PC-3 (cell line): ENCODE measurements at regions of chr7 and their contacts with region 1.

Region 1: GRCh38 chr7:134954197-134955082 is 31.9 kb upstream of the AGBL3 start:
- DNase-seq: peak; percentile 50
- ATAC-seq: peak; percentile 59
- H3K4me3 ChIP-seq: no peak overlapping the region
- H3K27ac ChIP-seq: no peak overlapping the region
- H3K4me1 ChIP-seq: no peaks in the 10 kb centered on the region
- H3K27me3 ChIP-seq: no peaks in the 10 kb centered on the region
- CTCF ChIP-seq: peak; percentile 74

Region 2: GRCh38 chr7:134403677-134404076 is 550.8 kb before region 1 on chr7:
- CTCF ChIA-PET with region 1: no interaction called
- POLR2A ChIA-PET with region 1: no interaction called
- intact Hi-C with region 1: no loop called
- DNase-seq: no peak
- ATAC-seq: no peak
- H3K4me3 ChIP-seq: no peak overlapping the region
- H3K27ac ChIP-seq: no peak overlapping the region
- H3K4me1 ChIP-seq: no peaks in the 10 kb centered on the region
- H3K27me3 ChIP-seq: no peaks in the 10 kb centered on the region
- CTCF ChIP-seq: no peak

Region 3: DNA sequence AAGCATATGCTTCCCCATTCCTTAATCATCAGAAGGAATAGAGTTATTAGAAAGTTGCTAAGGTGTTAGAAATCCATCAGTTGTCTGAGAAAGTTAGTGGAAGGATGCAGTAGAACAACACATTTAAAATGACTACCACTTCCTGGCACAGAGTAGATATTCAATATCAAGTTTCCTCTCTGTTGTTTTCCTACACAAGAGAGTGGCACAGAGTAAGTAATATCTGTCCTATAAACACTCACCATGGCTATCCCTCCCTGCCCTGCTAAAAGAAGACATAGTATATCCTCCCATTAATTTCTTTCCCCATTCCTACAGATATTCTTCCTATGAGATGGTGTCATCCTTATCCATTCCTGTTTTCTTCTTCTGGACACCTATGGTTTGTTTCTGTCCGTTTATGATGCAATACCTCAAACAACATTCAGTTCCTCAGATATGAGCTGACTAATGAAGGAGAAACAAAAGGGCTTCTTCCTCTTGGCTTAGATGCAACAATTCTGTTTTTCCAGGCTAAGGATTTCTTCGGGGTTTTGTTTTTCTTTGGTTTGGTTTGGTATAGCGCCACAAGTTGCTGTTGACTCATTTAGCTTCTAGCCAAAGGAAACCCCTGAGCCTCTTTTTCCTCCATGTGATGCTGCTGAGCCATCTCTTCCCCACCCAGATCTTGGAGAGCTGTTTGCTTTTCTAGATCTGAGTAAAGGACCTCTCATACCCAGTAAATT is 340.7 kb before region 1 on chr7:
- CTCF ChIA-PET with region 1: no interaction called
- POLR2A ChIA-PET with region 1: no interaction called
- intact Hi-C with region 1: loop called (anchors 5 kb)
- DNase-seq: peak; percentile 95
- ATAC-seq: peak; percentile 88
- H3K4me3 ChIP-seq: no peak overlapping the region
- H3K27ac ChIP-seq: peak overlapping the region; percentile 94
- H3K4me1 ChIP-seq: peaks cover 35% of the 10 kb centered on the region
- H3K27me3 ChIP-seq: no peaks in the 10 kb centered on the region
- CTCF ChIP-seq: no peak

Region 4: DNA sequence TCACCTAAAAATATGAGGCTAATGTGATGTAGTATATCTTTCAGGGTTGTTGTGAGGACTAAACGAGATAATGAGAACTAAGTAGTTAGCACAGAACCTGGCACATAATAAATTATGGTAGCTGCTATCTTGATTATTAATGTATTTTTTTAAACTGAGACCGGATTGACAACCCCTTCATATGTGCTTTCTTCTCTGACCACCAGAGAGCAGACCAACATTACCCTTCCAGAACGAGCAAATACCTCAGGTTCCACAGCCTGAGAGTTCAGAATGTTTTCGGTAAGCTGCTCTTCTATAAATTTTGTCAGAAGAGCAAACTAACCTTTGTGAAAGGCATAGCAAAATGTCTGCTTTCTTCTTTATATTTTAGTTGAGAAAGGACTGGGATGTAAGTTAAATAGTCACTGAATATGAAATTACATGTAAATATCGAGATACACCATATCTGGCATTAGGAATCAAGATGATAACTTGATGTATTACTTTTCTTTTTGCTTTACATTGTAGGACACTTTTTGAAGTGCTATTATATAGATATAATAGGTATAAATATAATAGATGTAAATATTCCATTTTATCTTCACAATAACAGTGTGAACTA is 321.4 kb before region 1 on chr7:
- CTCF ChIA-PET with region 1: no interaction called
- POLR2A ChIA-PET with region 1: no interaction called
- intact Hi-C with region 1: loop called (anchors 1 kb)
- DNase-seq: peak; percentile 64
- ATAC-seq: peak; percentile 69
- H3K4me3 ChIP-seq: no peak overlapping the region
- H3K27ac ChIP-seq: no peak overlapping the region
- H3K4me1 ChIP-seq: no peaks in the 10 kb centered on the region
- H3K27me3 ChIP-seq: no peaks in the 10 kb centered on the region
- CTCF ChIP-seq: peak; percentile 84

Region 5: GRCh38 chr7:134690016-134690415 is 264.4 kb before region 1 on chr7:
- CTCF ChIA-PET with region 1: no interaction called
- POLR2A ChIA-PET with region 1: no interaction called
- intact Hi-C with region 1: loop called (anchors 1 kb)
- DNase-seq: peak; percentile 15
- ATAC-seq: peak; percentile 51; the same call in 1 of the 2 replicates
- H3K4me3 ChIP-seq: no peak overlapping the region
- H3K27ac ChIP-seq: no peak overlapping the region
- H3K4me1 ChIP-seq: 0 out of 2 replicates have a peak, but pooled peaks cover 11% of the 10 kb centered on the region
- H3K27me3 ChIP-seq: no peaks in the 10 kb centered on the region
- CTCF ChIP-seq: peak; percentile 42; the same call in 1 of the 2 replicates

Region 6: DNA sequence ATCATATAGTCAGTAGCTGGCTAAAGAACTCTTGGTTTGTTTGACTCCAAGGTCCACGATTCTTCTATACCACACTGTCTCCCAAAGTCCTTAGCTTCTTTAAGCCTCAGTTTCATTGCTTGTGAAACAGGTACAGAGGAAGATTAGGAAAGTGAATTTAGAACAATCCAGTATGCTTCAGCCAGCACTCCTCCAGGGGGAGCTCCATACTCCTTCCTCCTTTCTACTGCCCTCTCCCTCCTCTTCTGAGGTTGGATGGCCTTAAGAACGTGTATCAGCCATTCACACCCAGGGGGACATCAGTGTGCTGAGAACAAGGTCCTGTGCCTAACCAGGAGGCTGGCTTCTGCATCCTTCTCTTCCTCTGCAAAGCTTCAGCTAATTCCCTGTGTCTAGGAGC is 229.8 kb before region 1 on chr7:
- CTCF ChIA-PET with region 1: no interaction called
- POLR2A ChIA-PET with region 1: no interaction called
- intact Hi-C with region 1: loop called (anchors 1 kb)
- DNase-seq: peak; percentile 53
- ATAC-seq: peak; percentile 88
- H3K4me3 ChIP-seq: no peak overlapping the region
- H3K27ac ChIP-seq: no peak overlapping the region
- H3K4me1 ChIP-seq: no peaks in the 10 kb centered on the region
- H3K27me3 ChIP-seq: no peaks in the 10 kb centered on the region
- CTCF ChIP-seq: peak; percentile 75

Region 7: DNA sequence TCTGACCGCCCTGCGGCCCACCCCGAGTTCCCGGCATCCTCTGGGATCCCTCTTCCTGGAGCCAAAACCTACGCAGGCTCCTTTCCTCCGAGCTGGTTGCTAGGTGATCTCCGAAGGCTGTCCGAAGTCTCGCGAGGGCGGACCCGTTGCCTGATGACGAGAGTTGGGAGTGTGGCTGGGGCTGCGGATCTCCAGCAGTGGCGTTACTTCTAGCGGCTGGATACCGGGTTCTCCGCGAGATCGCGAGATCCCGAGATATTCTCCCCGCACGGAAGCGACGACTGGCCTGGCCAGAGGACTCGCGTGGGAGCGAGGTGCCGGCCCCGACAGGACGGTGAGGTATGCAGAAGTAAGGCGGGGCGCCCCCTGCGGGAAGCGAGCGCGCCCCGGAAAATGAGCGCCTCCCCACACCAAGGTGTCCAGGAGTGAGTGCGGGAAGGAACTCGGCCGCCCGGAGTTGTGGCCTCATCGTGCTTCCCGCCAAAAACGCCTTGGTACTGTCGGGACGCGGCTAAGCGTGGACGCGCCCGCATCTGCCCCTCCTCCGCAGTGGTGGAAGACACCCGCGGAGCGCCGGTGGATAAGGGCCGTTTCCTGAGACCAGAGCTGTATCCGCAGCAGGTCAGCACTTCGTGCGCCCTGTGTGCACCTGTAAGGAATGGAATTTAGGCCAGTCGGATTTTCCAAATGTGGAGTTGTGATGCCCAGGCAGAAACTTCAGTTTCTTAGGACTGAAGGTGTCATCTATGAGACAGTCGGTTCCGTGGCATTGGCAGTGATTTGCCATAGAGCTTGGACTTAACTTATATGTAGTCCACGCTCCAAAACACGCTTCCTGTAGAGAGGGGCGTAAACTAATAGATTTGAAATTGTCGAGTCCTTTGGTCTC is 32.2 kb after region 1 on chr7 and contains the start of gene AGBL3:
- CTCF ChIA-PET with region 1: no interaction called
- POLR2A ChIA-PET with region 1: interaction called, 24 read pairs
- intact Hi-C with region 1: no loop called
- DNase-seq: peak; percentile 94
- ATAC-seq: peak; percentile 98
- H3K4me3 ChIP-seq: peak within 1 kb of the TSS; percentile 87
- H3K27ac ChIP-seq: peak within 1 kb of the TSS; percentile 45
- H3K4me1 ChIP-seq: peaks cover 20% of the 10 kb centered on the region; the same call in 1 of the 2 replicates
- H3K27me3 ChIP-seq: no peaks in the 10 kb centered on the region
- CTCF ChIP-seq: peak; percentile 74
- total RNA-seq, gene AGBL3: 1.9 and 2.5 TPM in 2 replicates